ENCODE measurements at regions of chr4 and their contacts with region 1.

Region 1: GRCh38 chr4:139554893-139555704 is 920 bp downstream of the SETD7 start:
- DNase-seq: peak; percentile 95
- H3K4me3 ChIP-seq: peak overlapping the region; percentile 88
- H3K27ac ChIP-seq: peak overlapping the region; percentile 98
- H3K4me1 ChIP-seq: peaks cover 74% of the 10 kb centered on the region
- H3K27me3 ChIP-seq: no peaks in the 10 kb centered on the region
- CTCF ChIP-seq: no peak

Region 2: DNA sequence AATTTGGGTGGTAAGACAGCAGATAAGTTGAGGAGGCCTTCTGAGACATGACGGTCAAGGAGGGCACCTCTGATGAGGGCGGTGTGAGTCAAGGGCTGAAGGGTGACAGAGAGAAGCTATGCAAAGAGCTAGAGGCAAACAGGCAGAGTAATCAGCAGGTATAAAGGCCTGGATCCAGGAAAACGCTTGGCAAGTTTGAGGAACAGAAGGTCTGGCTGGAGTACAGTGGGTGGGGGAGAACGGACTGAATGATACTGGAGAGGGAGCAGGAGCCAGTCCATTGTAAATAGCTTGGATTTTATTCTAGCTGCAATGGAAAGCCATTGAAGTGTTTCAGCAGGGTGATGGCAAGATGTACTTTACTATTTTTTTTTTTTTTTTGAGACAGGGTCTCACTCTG is 61.9 kb before region 1 on chr4:
- CTCF ChIA-PET with region 1: no interaction called
- POLR2A ChIA-PET with region 1: no interaction called
- intact Hi-C with region 1: loop called (anchors 10 kb)
- DNase-seq: no peak
- H3K4me3 ChIP-seq: no peak overlapping the region
- H3K27ac ChIP-seq: no peak overlapping the region
- H3K4me1 ChIP-seq: no peaks in the 10 kb centered on the region
- H3K27me3 ChIP-seq: no peaks in the 10 kb centered on the region
- CTCF ChIP-seq: no peak

Region 3: DNA sequence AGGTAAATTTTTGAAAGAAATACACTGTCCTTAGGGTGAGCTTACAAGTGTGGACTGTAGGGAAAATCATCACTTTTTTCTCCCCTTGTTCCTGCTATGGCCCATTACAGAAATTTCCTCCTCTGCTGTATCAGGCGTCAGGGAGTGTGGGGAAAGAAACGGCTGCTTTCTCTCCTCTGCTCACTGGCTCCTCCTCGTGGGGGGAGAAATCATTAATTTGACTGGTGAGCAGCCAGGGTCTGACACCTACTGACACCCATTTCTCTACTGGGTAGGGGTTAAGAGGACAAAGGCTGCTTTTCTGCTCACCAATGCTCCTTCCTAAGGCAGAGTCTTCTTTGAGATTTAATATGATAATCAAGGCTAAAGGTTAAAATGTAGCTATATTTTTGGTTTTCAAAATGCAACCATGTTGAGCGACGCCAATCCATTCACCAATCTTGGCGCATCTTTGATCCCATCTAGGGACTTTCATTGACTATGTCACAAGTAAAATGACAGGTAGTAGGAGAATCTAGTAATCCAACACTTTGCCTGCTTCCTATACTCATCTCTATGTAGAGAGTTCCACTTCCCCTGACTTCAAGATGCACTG is 24.2 kb before region 1 on chr4:
- CTCF ChIA-PET with region 1: no interaction called
- POLR2A ChIA-PET with region 1: interaction called, 12 read pairs
- intact Hi-C with region 1: no loop called
- DNase-seq: peak; percentile 72
- H3K4me3 ChIP-seq: no peak overlapping the region
- H3K27ac ChIP-seq: no peak overlapping the region
- H3K4me1 ChIP-seq: peaks cover 35% of the 10 kb centered on the region
- H3K27me3 ChIP-seq: no peaks in the 10 kb centered on the region
- CTCF ChIP-seq: peak; percentile 73